Activated CD4-positive, alpha-beta memory T cell treated with anti-CD3 and anti-CD28 coated beads for 36 hours (primary cell): ENCODE measurements at regions of chr10 and their contacts with region 1.

Region 1: GRCh38 chr10:93376372-93377293 is 105.5 kb downstream of the MYOF start:
- DNase-seq: peak; percentile 34
- H3K4me3 Mint-ChIP-seq: no peak overlapping the region
- H3K27ac Mint-ChIP-seq: peak overlapping the region; percentile 34
- H3K4me1 Mint-ChIP-seq: peaks cover 41% of the 10 kb centered on the region
- H3K27me3 Mint-ChIP-seq: no peaks in the 10 kb centered on the region

Region 2: DNA sequence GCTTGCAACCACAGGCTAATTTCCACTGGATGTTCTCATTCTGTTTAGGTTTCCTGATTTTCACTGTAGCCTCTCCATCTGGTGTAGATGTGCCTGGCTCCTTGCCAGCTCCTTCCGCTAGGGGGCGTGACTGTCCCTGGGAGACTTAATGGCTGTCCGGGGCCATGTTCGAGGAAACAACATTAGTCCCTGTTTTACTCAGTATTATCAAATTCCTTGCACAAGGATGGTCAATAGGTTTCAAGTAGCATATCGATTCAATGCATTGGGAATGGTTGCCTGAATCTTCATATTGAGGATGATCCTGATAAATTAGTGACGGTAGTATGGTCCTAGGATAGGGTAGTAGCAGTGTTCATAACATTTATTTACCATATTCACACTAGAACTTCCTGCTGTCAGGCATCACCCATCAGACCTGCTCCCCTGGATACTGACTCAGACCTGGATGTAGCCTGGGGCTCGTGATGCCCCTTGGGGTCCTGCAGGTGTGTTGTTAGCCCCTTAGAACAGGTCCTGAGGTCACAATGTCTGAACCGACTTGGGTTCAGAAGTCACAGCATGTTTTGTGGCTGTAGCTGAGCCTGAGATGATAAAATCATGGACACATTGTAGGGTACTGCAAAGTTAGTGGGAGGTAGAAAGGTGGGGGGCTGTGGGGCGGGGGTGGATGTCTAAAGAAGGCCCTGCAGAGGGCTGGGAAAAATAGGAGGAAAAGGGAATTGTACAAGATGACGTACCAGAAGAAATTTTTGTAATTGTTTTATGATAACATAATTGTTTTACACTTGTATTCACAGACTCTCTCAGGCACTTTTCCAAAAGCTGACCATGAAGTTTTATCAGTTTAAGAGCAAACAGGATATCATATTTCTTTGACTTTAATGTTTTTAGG is 537.2 kb before region 1 on chr10:
- CTCF ChIA-PET with region 1: no interaction called
- POLR2A ChIA-PET with region 1: no interaction called
- intact Hi-C with region 1: no loop called
- DNase-seq: peak; percentile 75
- H3K4me3 Mint-ChIP-seq: no peak overlapping the region
- H3K27ac Mint-ChIP-seq: no peak overlapping the region
- H3K4me1 Mint-ChIP-seq: peaks cover 4% of the 10 kb centered on the region
- H3K27me3 Mint-ChIP-seq: no peaks in the 10 kb centered on the region

Region 3: DNA sequence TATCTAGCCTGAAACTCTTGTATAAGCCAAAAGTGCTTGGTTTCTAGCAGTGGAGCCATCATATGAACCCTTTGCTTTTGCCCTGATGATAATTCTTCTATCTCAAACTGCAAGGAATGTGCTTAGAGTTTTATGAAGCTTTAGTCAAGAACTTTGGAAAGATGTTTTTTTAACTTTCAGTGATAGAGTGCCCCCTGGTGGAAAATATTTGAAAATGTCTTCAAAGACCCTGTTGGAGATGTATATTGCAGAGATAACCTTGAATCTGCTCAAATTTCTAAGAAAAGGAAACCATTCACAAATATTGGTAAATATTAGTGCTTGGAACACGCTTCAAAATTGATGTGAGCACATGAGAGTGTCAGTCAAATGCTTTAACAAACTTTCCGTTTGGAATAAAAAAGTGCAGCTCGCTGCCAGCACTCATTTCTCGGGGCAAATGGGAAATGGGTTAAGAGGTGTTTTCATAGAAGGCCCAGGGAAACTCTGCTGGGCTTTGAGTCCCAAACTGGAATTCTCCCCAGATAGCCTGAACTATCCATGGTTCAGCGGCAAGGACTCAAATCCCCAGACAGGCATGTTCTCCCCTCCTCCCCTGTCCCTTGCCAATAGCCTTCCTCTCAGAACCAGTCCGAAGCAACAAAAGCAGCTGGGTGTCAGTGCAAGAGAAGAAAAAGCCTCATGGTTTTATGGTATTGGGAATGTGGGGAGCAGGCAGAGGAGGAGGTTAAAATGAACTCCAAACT is 23.8 kb before region 1 on chr10:
- CTCF ChIA-PET with region 1: interaction called, 20 read pairs
- POLR2A ChIA-PET with region 1: no interaction called
- intact Hi-C with region 1: no loop called
- DNase-seq: no peak
- H3K4me3 Mint-ChIP-seq: no peak overlapping the region
- H3K27ac Mint-ChIP-seq: no peak overlapping the region
- H3K4me1 Mint-ChIP-seq: peaks cover 3% of the 10 kb centered on the region
- H3K27me3 Mint-ChIP-seq: peaks cover 11% of the 10 kb centered on the region

Region 4: DNA sequence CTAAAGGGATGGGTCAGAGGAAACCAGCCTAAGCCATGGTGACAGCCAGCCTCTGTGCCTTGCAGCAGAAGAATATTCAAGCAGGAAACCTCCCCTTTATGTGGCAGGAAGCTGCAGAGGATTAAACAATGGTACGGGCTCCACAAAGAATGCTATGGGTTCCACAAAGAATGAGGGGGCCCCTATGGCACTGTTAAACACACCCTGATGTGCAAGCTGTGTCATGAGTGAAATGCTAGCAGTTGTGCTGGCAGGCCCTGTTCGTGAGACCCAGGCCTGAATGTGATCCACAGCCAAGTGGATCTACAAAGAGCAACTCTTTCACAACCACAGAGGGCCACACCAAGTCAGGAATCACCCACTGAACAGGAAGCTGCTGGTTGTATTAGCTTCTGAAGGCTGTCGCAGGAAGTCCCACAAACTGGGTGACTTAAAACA is 36.6 kb after region 1 on chr10:
- CTCF ChIA-PET with region 1: interaction called, 10 read pairs
- POLR2A ChIA-PET with region 1: interaction called, 10 read pairs
- intact Hi-C with region 1: loop called (anchors 1 kb)
- DNase-seq: peak; percentile 56
- H3K4me3 Mint-ChIP-seq: no peak overlapping the region
- H3K27ac Mint-ChIP-seq: peak overlapping the region; percentile 57
- H3K4me1 Mint-ChIP-seq: peaks cover 58% of the 10 kb centered on the region
- H3K27me3 Mint-ChIP-seq: no peaks in the 10 kb centered on the region

Region 5: DNA sequence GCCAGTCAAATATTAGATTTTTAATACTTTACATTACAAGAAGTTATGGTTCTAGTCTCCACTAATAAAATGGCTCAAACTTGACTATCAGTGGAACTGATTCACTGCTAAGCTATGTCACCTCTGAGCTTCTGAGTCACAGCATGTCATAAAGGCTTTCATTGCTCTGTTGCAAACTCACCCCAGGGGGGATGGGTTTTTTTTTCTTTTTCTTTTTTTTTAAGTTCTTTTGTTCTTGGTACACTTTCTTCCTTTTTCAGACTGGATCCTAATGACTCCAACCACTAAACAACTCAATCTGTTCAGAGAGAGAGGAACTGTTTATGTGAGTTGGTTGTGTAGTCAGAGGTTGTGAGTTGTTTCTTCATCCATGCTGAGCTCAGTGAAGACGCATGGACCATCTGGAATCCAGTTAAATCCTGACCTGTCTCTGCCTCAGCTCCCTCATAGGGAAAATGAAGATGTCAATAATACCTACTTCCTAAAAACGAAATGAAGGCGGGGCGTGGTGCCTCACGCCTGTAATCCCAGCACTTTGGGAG is 94.5 kb after region 1 on chr10:
- CTCF ChIA-PET with region 1: interaction called, 20 read pairs
- POLR2A ChIA-PET with region 1: interaction called, 6 read pairs
- intact Hi-C with region 1: no loop called
- DNase-seq: no peak
- H3K4me3 Mint-ChIP-seq: no peak overlapping the region
- H3K27ac Mint-ChIP-seq: no peak overlapping the region
- H3K4me1 Mint-ChIP-seq: peaks cover 19% of the 10 kb centered on the region
- H3K27me3 Mint-ChIP-seq: no peaks in the 10 kb centered on the region

Region 6: GRCh38 chr10:93503075-93503474 is 126.4 kb after region 1 on chr10:
- CTCF ChIA-PET with region 1: interaction called, 193 read pairs
- POLR2A ChIA-PET with region 1: no interaction called
- intact Hi-C with region 1: no loop called
- DNase-seq: no peak
- H3K4me3 Mint-ChIP-seq: peak overlapping the region; percentile 36
- H3K27ac Mint-ChIP-seq: peak overlapping the region; percentile 50
- H3K4me1 Mint-ChIP-seq: peaks cover 51% of the 10 kb centered on the region
- H3K27me3 Mint-ChIP-seq: no peaks in the 10 kb centered on the region

Region 7: DNA sequence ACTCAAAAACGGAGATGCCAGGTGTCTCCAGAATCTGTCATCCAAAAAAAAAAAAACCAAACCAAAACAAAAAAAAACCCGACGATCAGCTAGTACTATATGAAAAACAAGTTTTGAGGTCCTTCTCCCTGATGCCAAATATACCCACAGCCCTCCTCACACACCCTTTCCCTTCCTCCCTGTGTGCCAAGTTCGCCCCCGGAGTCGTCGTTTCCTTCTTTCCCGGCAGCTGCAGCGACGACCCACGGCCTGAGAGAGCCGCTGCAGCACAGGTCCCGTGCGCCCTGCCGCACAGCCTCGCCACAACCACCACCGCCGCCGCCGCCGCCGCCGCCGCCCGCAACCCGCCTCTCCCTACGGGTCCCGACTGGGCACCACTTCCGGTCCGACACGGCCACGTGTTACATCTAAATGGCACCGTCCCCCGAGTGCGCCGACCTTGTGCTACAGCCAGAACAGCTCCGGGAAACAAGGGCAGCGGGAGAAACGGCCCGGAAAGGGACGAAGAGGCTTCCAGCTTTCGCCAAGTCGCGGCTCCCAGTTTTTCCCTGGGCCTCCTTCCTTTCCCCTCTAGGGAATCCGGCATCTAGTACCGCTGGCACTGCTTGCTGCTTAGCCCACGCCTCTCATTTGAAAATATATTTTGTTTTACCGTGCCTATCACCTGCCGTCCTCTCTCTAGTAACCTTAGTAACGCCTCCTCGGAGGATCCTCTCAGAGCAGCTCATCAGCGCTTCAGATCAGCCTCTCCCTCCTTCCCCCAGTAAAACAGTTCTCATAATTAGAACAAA is 325.8 kb after region 1 on chr10 and contains the start of gene FRA10AC1:
- CTCF ChIA-PET with region 1: interaction called, 3 read pairs
- POLR2A ChIA-PET with region 1: no interaction called
- intact Hi-C with region 1: loop called (anchors 1 kb)
- DNase-seq: peak; percentile 92
- H3K4me3 Mint-ChIP-seq: no peak within 1 kb of the TSS
- H3K27ac Mint-ChIP-seq: no peak within 1 kb of the TSS
- H3K4me1 Mint-ChIP-seq: peaks cover 15% of the 10 kb centered on the region
- H3K27me3 Mint-ChIP-seq: no peaks in the 10 kb centered on the region
- total RNA-seq, gene FRA10AC1: 18.6 to 19.0 TPM

Region 8: DNA sequence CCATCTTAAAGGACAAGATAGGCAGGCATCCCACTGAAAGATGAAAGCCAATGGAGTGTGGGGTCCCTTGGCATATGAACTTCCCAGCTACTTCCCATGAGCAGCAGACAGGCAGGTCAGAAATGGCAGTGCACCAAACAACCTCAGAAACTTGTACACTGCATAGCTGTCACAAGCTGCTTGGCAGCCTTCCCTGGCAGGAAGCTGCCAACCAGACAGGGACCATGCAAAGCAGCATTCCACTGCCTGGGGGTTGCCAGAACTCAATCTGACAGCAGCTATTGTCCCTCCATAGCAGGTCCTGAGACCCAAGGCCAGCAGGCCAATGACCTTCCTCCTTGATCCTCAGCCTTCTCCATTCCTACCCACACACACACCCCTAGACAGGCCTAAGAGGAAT is 756.6 kb after region 1 on chr10:
- CTCF ChIA-PET with region 1: no interaction called
- POLR2A ChIA-PET with region 1: no interaction called
- intact Hi-C with region 1: no loop called
- DNase-seq: no peak
- H3K4me3 Mint-ChIP-seq: no peak overlapping the region
- H3K27ac Mint-ChIP-seq: no peak overlapping the region
- H3K4me1 Mint-ChIP-seq: no peaks in the 10 kb centered on the region
- H3K27me3 Mint-ChIP-seq: no peaks in the 10 kb centered on the region